PC-3 (cell line): ENCODE measurements at regions of chr12 and their contacts with region 1.

Region 1: DNA sequence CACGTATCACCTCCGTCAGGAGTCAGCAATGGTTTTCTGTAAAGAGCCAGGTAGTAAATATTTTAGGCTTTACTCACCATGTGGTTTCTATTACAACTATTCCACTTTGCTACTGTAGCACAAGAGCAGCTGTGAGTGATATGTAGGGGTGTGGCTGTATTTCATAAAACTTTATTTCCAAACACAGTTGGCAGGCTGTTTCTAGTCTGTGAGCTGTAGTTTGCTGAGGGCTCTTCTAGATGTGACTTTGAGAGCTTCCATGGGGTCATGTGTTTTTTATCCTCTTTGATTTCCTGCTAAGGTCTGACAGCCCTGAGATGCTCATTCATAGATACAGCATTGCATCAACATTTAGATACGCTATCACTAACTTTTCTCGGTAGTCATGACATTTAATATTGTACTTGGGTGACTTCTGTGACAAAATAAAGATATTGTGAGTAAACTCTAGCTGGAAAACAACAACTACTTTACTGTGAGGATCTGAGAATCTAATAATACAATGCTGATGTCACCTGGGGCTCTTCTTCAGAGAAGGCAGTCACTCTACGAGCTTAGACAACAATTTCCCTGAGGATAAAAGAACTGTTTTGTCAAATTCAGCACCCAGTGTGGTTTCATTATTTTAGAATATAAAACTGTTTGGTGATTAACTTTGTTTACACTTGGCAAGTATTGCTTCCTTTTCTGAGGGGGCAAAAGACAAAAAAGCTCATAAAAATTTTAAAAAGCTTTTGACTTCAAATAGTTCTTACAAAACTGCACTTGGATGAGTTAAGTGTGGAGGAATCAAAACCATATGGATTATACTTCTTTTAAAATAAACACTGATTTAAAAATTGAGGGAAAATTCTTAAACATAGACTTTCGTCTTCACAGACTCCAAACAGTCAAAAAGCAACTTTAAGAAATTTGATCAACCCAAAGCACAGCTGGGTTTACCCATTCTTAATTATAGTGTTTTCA is 231.2 kb upstream of the DCN start:
- DNase-seq: peak; percentile 95
- ATAC-seq: peak; percentile 99
- H3K4me3 ChIP-seq: peak overlapping the region; percentile 1; the same call in 1 of the 2 replicates
- H3K27ac ChIP-seq: peak overlapping the region; percentile 67
- H3K4me1 ChIP-seq: peaks cover 18% of the 10 kb centered on the region
- H3K27me3 ChIP-seq: no peaks in the 10 kb centered on the region
- CTCF ChIP-seq: no peak

Region 2: GRCh38 chr12:91515944-91516694 is 102.3 kb after region 1 on chr12:
- CTCF ChIA-PET with region 1: no interaction called
- POLR2A ChIA-PET with region 1: no interaction called
- intact Hi-C with region 1: no loop called
- DNase-seq: no peak
- ATAC-seq: no peak
- H3K4me3 ChIP-seq: no peak overlapping the region
- H3K27ac ChIP-seq: no peak overlapping the region
- H3K4me1 ChIP-seq: no peaks in the 10 kb centered on the region
- H3K27me3 ChIP-seq: no peaks in the 10 kb centered on the region
- CTCF ChIP-seq: no peak

Region 3: GRCh38 chr12:91529829-91530228 is 116.0 kb after region 1 on chr12:
- CTCF ChIA-PET with region 1: no interaction called
- POLR2A ChIA-PET with region 1: no interaction called
- intact Hi-C with region 1: loop called (anchors 1 kb)
- DNase-seq: peak; percentile 92
- ATAC-seq: peak; percentile 99
- H3K4me3 ChIP-seq: no peak overlapping the region
- H3K27ac ChIP-seq: peak overlapping the region; percentile 45
- H3K4me1 ChIP-seq: peaks cover 16% of the 10 kb centered on the region
- H3K27me3 ChIP-seq: no peaks in the 10 kb centered on the region
- CTCF ChIP-seq: no peak

Region 4: DNA sequence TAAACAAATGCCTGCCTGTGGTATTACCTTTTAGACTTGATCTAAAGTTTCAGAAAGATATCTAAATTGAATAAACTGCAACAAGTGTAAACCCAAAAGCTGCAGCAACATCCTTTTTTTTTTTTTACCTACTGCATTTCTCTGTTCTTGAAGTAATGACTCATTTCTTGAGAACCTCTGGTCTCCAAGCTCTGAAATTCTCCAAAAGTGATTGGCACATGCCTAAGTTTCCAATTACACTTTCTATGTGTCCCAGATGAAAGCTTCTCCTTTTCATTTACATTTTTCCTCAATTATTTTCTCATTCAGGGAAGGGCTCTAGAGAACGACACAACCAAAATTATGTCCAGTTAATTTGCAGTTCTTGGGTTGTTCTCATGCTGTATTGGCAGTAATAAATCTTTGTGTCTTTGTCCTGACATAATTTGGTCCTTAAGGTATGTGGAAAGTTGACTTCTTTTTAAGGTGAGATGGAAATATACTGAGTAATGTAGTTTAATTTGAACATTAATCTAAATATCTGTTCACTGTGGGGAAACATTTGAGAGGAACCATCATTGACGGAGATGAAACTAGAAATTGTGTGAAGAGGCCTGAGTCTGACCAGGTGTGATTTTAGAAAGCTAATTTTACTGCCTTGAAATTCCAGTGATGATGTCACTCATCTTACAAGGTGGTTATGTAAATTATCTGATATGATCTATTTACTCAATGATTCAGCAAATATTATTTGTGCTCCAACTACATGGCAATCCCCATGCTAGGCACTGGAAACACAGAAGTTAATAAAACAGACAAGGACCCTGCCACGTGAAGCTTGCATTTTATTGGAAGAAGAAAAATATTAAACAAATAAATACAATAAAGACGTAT is 204.2 kb after region 1 on chr12:
- CTCF ChIA-PET with region 1: no interaction called
- POLR2A ChIA-PET with region 1: no interaction called
- intact Hi-C with region 1: loop called (anchors 2 kb)
- DNase-seq: peak; percentile 57
- ATAC-seq: peak; percentile 50
- H3K4me3 ChIP-seq: no peak overlapping the region
- H3K27ac ChIP-seq: peak overlapping the region; percentile 77
- H3K4me1 ChIP-seq: peaks cover 21% of the 10 kb centered on the region
- H3K27me3 ChIP-seq: no peaks in the 10 kb centered on the region
- CTCF ChIP-seq: no peak

Region 5: GRCh38 chr12:91687052-91688017 is 273.5 kb after region 1 on chr12:
- CTCF ChIA-PET with region 1: no interaction called
- POLR2A ChIA-PET with region 1: no interaction called
- intact Hi-C with region 1: loop called (anchors 10 kb)
- DNase-seq: peak; percentile 66
- ATAC-seq: peak; percentile 75
- H3K4me3 ChIP-seq: no peak overlapping the region
- H3K27ac ChIP-seq: peak overlapping the region; percentile 81
- H3K4me1 ChIP-seq: peaks cover 33% of the 10 kb centered on the region
- H3K27me3 ChIP-seq: no peaks in the 10 kb centered on the region
- CTCF ChIP-seq: no peak